ENCODE measurements at regions of chr6 and their contacts with region 1.

Region 1: GRCh38 chr6:151014404-151015100 is 149.1 kb downstream of the MTHFD1L start:
- DNase-seq: peak; percentile 33 to 64 (median 62)
- H3K4me3 ChIP-seq: no peak overlapping the region
- H3K4me3 Mint-ChIP-seq: peak overlapping the region in 1 of 2 donors; percentile 48
- H3K27ac ChIP-seq: no peak overlapping the region
- H3K27ac Mint-ChIP-seq: peak overlapping the region in 5 of 7 donors; percentile 27 to 73 (median 45)
- H3K4me1 ChIP-seq: no peaks in the 10 kb centered on the region
- H3K4me1 Mint-ChIP-seq: peaks cover 16% of the 10 kb centered on the region
- H3K27me3 ChIP-seq: no peaks in the 10 kb centered on the region
- H3K27me3 Mint-ChIP-seq: no peaks in the 10 kb centered on the region
- CTCF ChIP-seq: peak; percentile 100

Region 2: DNA sequence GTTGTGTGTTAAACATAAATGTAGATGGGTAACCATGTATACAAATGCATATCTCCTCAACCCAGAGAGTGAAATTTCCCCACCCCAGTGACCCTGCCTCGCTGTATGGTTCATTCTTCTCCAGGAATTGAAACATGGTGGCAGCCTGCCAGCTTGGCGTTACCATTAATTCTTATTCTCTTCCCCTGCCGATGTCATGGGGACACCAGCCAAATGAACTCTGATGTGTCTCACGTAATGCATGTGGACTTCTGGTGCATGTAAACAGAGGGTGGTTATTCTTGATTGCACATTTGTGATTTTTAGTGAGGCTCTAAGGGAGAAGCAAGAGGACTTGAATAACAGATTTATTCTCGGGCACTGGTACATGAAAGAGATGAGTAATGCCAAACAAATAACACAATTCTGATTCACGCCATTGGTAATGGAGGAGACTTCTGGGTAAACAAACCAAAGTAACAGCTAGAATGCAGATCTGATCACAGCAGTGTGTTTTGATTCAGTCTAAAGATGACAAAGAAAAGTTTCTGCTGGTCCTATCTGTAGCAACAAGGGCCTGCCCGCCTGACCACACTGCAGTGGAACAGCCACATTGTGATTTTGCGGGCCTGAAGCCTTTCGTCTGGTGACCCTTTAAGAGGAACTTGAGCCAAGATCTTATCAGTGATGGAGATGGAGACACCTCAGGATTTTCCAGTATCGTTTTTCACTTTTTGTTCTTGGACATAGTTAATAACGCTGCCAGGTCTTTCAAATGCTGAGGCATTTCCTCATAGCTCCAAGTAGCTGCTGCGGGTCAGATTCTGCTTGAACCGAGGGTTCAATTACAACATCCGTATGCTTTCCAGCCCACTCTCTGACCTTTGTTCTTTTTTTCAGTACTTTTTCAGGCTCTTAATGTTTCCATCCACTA is 53.4 kb after region 1 on chr6:
- intact Hi-C with region 1: loop called in 1 of 2 experiments (anchors 10 kb)
- DNase-seq: no peak
- H3K4me3 ChIP-seq: no peak overlapping the region
- H3K4me3 Mint-ChIP-seq: no peak overlapping the region
- H3K27ac ChIP-seq: no peak overlapping the region
- H3K27ac Mint-ChIP-seq: peak overlapping the region in 1 of 7 donors; percentile 3
- H3K4me1 ChIP-seq: no peaks in the 10 kb centered on the region
- H3K4me1 Mint-ChIP-seq: no peaks in the 10 kb centered on the region
- H3K27me3 ChIP-seq: no peaks in the 10 kb centered on the region
- H3K27me3 Mint-ChIP-seq: no peaks in the 10 kb centered on the region
- CTCF ChIP-seq: no peak

Region 3: GRCh38 chr6:151254451-151255081 is 240.0 kb after region 1 on chr6:
- intact Hi-C with region 1: no loop called
- DNase-seq: no peak
- H3K4me3 ChIP-seq: no peak overlapping the region
- H3K4me3 Mint-ChIP-seq: peak overlapping the region in 1 of 2 donors; percentile 40
- H3K27ac ChIP-seq: no peak overlapping the region
- H3K27ac Mint-ChIP-seq: no peak overlapping the region
- H3K4me1 ChIP-seq: no peaks in the 10 kb centered on the region
- H3K4me1 Mint-ChIP-seq: no peaks in the 10 kb centered on the region
- H3K27me3 ChIP-seq: peaks cover 0 to 2% of the 10 kb centered on the region in 2 donors
- H3K27me3 Mint-ChIP-seq: peaks cover 7 to 17% (median 14%) of the 10 kb centered on the region in 3 donors
- CTCF ChIP-seq: no peak

Region 4: GRCh38 chr6:151323791-151324487 is 309.4 kb after region 1 on chr6:
- intact Hi-C with region 1: loop called in 1 of 2 experiments (anchors 5 kb)
- DNase-seq: peak; percentile 37 to 65 (median 63)
- H3K4me3 ChIP-seq: no peak overlapping the region
- H3K4me3 Mint-ChIP-seq: peak overlapping the region in 1 of 2 donors; percentile 90
- H3K27ac ChIP-seq: no peak overlapping the region
- H3K27ac Mint-ChIP-seq: no peak overlapping the region
- H3K4me1 ChIP-seq: peaks cover 11 to 12% of the 10 kb centered on the region in 2 donors
- H3K4me1 Mint-ChIP-seq: peaks cover 17% of the 10 kb centered on the region
- H3K27me3 ChIP-seq: peaks cover 25 to 34% of the 10 kb centered on the region in 2 donors
- H3K27me3 Mint-ChIP-seq: peaks cover 48 to 53% (median 51%) of the 10 kb centered on the region in 3 donors
- CTCF ChIP-seq: peak; percentile 97

Region 5: GRCh38 chr6:151566557-151566956 is 552.0 kb after region 1 on chr6:
- intact Hi-C with region 1: no loop called
- DNase-seq: no peak
- H3K4me3 ChIP-seq: no peak overlapping the region
- H3K4me3 Mint-ChIP-seq: no peak overlapping the region
- H3K27ac ChIP-seq: no peak overlapping the region
- H3K27ac Mint-ChIP-seq: peak overlapping the region in 1 of 7 donors; percentile 35
- H3K4me1 ChIP-seq: no peaks in the 10 kb centered on the region
- H3K4me1 Mint-ChIP-seq: no peaks in the 10 kb centered on the region
- H3K27me3 ChIP-seq: no peaks in the 10 kb centered on the region
- H3K27me3 Mint-ChIP-seq: peaks cover 1 to 3% (median 2%) of the 10 kb centered on the region in 3 donors
- CTCF ChIP-seq: no peak